ENCODE measurements at regions of chr1 and their contacts with region 1.

Region 1: DNA sequence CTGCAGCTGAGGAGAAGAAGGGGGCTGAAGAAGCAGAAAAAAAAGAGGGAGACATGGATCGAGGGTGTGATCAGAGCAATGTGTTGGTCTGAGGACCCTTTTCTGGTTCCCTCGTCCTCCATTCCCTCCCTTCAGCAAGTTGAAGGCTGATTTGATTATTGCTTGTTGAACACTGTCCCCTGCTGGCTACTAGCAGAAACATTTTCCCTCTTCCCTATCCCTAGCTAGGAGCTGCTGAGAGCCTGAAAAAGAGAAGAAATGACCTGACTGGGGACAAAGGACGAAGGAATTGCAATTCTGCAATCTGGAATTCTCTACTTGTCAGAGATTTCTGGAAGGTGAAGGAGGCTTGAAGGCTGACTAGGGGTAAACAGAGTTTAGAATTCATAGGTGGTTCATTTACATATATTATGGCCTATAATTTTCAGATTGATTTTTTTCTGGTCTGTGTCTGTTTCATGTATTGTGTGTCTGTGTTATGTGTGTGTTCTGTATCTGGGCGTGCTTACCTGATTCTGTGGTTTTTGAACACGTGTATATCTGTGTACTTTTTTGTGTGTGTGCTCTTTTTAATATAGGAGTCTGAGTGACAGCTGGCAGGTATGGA is 9.8 kb downstream of the NHLH1 start:
- DNase-seq: peak; percentile 41
- ATAC-seq: peak; percentile 85
- H3K4me3 Mint-ChIP-seq: no peak overlapping the region
- H3K27ac Mint-ChIP-seq: no peak overlapping the region
- H3K4me1 Mint-ChIP-seq: peaks cover 11% of the 10 kb centered on the region
- H3K27me3 Mint-ChIP-seq: no peaks in the 10 kb centered on the region
- CTCF ChIP-seq: peak; percentile 95

Region 2: DNA sequence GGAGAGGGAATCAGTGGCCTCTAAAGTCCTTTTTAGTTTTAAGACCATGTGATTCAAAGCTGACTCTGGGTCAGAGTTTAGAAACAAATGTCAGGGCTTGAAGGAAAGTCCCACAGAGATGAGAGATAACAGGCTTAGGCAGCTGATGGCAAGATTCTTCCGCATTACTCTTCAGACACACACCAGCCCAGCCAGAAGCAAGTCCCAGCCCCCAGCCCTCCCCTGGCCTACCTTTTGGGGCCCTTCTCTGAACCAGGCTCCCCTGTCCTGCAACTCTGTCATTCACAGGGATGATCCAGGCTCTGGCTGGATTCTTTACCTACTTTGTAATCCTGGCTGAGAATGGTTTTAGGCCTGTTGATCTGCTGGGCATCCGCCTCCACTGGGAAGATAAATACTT is 199.4 kb before region 1 on chr1:
- CTCF ChIA-PET with region 1: no interaction called
- POLR2A ChIA-PET with region 1: no interaction called
- intact Hi-C with region 1: no loop called
- DNase-seq: no peak
- ATAC-seq: peak; percentile 39
- H3K4me3 Mint-ChIP-seq: no peak overlapping the region
- H3K27ac Mint-ChIP-seq: no peak overlapping the region
- H3K4me1 Mint-ChIP-seq: no peaks in the 10 kb centered on the region
- H3K27me3 Mint-ChIP-seq: peaks cover 13% of the 10 kb centered on the region
- CTCF ChIP-seq: no peak

Region 3: DNA sequence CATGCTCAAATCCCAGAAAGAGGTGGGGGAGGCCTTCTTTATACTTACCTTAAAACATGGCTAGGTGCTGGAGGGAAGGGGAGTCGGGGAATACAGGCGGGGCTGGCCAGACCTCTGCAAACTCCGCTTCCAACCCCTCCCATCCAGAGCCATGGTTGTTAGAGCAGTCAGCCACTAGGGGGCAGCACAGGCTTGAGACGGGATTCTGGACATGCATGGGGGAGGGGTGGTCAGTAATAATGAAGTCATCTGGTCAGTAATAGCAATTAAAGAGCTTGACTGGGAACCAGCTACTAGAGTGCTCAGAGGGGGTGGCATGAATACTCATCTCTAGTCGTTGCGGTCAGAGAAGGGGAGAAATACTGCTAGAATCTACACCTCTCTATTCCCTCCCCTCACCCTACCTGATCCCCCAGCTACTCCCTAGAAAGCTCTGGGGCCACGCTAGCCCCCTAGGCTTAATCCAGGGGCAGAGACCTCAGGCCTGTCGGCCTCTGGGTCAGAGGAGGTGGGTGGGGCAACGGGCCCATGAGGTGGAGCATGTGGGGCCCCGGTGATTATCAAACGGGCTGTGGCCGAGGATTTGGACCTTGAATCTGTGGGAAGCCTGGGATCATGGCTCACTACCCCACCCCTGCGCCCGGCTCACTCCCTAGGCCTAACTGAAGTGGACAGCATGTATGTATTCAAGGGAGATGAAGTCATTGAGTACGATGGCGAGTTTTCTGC is 183.4 kb before region 1 on chr1:
- CTCF ChIA-PET with region 1: interaction called, 33 read pairs
- POLR2A ChIA-PET with region 1: no interaction called
- intact Hi-C with region 1: loop called (anchors 10 kb)
- DNase-seq: peak; percentile 86
- ATAC-seq: peak; percentile 93
- H3K4me3 Mint-ChIP-seq: no peak overlapping the region
- H3K27ac Mint-ChIP-seq: no peak overlapping the region
- H3K4me1 Mint-ChIP-seq: no peaks in the 10 kb centered on the region
- H3K27me3 Mint-ChIP-seq: peaks cover 2% of the 10 kb centered on the region
- CTCF ChIP-seq: peak; percentile 94

Region 4: DNA sequence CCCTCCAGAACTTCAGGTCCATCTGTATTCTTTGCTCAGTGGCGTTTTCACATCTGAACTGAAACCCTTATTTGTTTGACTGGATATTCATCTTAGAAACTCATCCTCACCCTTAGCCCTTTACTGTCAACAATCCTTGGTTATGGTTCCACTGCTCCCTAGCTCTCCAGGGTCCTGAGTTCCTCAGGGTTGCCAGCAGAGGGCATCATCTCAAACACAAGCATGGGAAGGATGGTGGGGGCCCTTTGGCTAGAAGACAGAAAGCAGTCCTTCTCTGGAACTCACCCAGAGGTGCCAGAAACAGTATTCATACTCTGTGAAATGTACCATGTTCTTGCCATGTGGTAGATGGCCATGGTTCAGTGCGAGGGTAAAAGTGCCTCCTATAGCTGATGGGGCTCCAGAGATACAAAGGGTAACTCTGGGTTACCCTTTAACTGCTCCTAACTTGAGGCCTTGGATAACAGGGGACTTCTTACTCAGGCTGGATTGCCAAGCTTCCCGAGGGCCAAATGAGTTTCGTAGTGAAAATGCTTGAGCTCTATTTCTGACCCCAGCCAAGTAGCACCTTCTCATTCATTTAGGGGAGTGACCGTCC is 22.1 kb before region 1 on chr1:
- CTCF ChIA-PET with region 1: interaction called, 87 read pairs
- POLR2A ChIA-PET with region 1: interaction called, 4 read pairs
- intact Hi-C with region 1: no loop called
- DNase-seq: peak; percentile 24
- ATAC-seq: peak; percentile 70
- H3K4me3 Mint-ChIP-seq: no peak overlapping the region
- H3K27ac Mint-ChIP-seq: no peak overlapping the region
- H3K4me1 Mint-ChIP-seq: peaks cover 2% of the 10 kb centered on the region
- H3K27me3 Mint-ChIP-seq: no peaks in the 10 kb centered on the region
- CTCF ChIP-seq: peak; percentile 11

Region 5: DNA sequence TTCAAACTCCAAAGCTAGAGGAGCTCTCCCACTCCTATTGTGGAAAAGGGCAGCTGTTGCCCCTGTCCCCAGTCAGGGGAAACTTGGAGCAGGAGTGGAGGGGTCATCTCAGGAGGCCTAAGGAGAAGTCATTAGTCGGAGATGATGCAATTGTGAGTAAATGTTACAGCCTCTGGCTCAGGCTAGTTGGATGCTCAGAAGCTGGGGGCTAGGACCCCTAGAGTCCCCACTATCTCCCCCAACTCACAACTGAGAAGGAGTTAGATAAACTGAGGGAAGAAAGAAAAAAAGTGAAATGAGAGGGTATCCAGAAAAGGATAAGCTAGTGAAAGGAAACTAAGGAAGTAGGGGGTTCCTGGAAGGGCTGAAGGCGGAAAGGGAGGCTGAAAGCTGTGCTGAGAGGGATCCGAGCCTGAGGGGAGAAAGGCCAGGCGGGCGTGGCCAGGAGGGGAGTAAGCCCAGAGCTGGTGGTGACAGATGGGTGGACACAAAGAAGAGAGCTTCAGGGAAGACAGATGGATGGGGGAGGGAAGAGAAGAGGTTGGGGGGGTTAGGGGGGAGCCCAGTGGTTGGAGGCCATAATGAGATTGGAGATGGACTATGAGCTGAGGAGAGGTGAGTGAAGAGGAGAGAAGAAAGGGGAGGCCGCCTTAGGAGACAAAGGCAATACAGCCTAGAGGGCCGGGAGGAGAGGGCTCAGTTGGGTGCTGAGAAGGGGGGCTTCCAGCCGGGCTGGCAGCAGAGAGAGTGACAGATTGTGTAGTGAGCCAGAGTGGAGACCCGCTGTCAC is 14.3 kb before region 1 on chr1:
- CTCF ChIA-PET with region 1: interaction called, 87 read pairs
- POLR2A ChIA-PET with region 1: interaction called, 3 read pairs
- intact Hi-C with region 1: no loop called
- DNase-seq: no peak
- ATAC-seq: no peak
- H3K4me3 Mint-ChIP-seq: no peak overlapping the region
- H3K27ac Mint-ChIP-seq: peak overlapping the region; percentile 59
- H3K4me1 Mint-ChIP-seq: no peaks in the 10 kb centered on the region
- H3K27me3 Mint-ChIP-seq: no peaks in the 10 kb centered on the region
- CTCF ChIP-seq: no peak

Region 6: DNA sequence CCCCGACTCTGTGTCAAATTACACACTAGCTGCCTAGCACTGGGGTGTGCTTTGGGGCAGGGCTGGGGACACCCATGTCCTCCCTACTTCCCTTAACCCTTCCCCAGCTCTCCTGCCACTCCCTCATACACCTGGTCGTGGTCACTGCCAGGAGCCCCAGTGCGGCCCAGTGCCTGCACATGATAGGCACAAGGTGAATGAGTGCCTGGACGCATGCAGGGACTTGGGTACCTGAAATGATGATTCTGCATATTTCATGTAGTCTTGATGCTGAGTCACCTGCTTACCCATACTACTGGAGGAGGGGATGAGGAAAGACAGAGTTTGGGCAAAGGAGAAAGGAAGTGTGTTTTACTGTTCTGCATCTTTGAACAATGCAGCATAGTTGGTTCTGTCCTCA is 22.2 kb after region 1 on chr1:
- CTCF ChIA-PET with region 1: interaction called, 13 read pairs
- POLR2A ChIA-PET with region 1: interaction called, 3 read pairs
- intact Hi-C with region 1: no loop called
- DNase-seq: no peak
- ATAC-seq: no peak
- H3K4me3 Mint-ChIP-seq: no peak overlapping the region
- H3K27ac Mint-ChIP-seq: no peak overlapping the region
- H3K4me1 Mint-ChIP-seq: peaks cover 7% of the 10 kb centered on the region
- H3K27me3 Mint-ChIP-seq: peaks cover 14% of the 10 kb centered on the region
- CTCF ChIP-seq: no peak

Region 7: GRCh38 chr1:160437432-160438316 is 61.0 kb after region 1 on chr1:
- CTCF ChIA-PET with region 1: no interaction called
- POLR2A ChIA-PET with region 1: no interaction called
- intact Hi-C with region 1: no loop called
- DNase-seq: peak; percentile 49
- ATAC-seq: peak; percentile 88
- H3K4me3 Mint-ChIP-seq: peak overlapping the region; percentile 66
- H3K27ac Mint-ChIP-seq: peak overlapping the region; percentile 93
- H3K4me1 Mint-ChIP-seq: peaks cover 53% of the 10 kb centered on the region
- H3K27me3 Mint-ChIP-seq: no peaks in the 10 kb centered on the region
- CTCF ChIP-seq: no peak

Region 8: GRCh38 chr1:160460683-160461287 is 84.2 kb after region 1 on chr1:
- CTCF ChIA-PET with region 1: no interaction called
- POLR2A ChIA-PET with region 1: no interaction called
- intact Hi-C with region 1: no loop called
- DNase-seq: peak; percentile 63
- ATAC-seq: peak; percentile 72
- H3K4me3 Mint-ChIP-seq: peak overlapping the region; percentile 67
- H3K27ac Mint-ChIP-seq: peak overlapping the region; percentile 98
- H3K4me1 Mint-ChIP-seq: peaks cover 85% of the 10 kb centered on the region
- H3K27me3 Mint-ChIP-seq: no peaks in the 10 kb centered on the region
- CTCF ChIP-seq: no peak

Region 9: GRCh38 chr1:160558660-160559380 is 182.2 kb after region 1 on chr1:
- CTCF ChIA-PET with region 1: no interaction called
- POLR2A ChIA-PET with region 1: no interaction called
- intact Hi-C with region 1: no loop called
- DNase-seq: no peak
- ATAC-seq: peak; percentile 31
- H3K4me3 Mint-ChIP-seq: peak overlapping the region; percentile 62
- H3K27ac Mint-ChIP-seq: peak overlapping the region; percentile 95
- H3K4me1 Mint-ChIP-seq: peaks cover 68% of the 10 kb centered on the region
- H3K27me3 Mint-ChIP-seq: no peaks in the 10 kb centered on the region
- CTCF ChIP-seq: no peak